ENCODE measurements at regions of chr12 and their contacts with region 1.

Region 1: GRCh38 chr12:58346032-58346632 is 404.8 kb downstream of the ATP23 start:
- DNase-seq: no peak
- H3K4me3 Mint-ChIP-seq: no peak overlapping the region
- H3K27ac Mint-ChIP-seq: no peak overlapping the region
- H3K4me1 Mint-ChIP-seq: no peaks in the 10 kb centered on the region
- H3K27me3 Mint-ChIP-seq: peaks cover 5% of the 10 kb centered on the region

Region 2: GRCh38 chr12:58247638-58248037 is 98.5 kb before region 1 on chr12:
- intact Hi-C with region 1: no loop called
- DNase-seq: no peak
- H3K4me3 Mint-ChIP-seq: no peak overlapping the region
- H3K27ac Mint-ChIP-seq: no peak overlapping the region
- H3K4me1 Mint-ChIP-seq: no peaks in the 10 kb centered on the region
- H3K27me3 Mint-ChIP-seq: peaks cover 2% of the 10 kb centered on the region

Region 3: DNA sequence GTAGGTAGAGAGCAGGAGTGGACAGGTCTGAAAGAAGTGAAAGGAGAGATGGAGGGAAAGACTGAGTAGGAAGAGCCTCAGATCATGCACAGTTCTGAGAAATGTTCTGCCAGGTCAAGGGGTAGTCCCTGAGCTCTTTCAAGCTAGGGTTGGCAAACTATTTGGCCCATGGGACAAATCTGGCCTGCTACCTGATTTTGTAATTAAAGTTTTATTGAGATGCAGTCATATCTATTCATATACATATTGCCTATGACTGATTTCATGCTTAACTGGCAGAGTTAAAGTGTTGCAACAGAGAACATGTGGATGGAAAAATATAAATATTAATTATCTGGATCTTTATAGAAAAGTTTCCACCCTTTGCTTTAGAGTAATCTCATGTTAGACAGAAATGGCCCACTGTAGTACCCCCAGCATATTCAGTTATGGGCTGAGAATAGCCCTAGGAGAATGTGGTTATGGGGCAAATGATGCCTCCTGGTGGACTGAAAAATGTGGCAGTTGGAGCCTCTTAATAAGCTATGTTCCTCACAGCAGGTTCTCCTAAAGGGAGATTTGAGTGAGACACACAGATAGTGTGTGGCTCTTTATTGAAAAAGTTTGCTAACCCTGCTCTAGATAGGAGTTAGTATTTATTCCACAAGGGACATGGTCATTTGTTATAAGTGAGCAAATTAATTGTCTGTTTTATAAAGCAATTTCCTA is 97.3 kb after region 1 on chr12:
- intact Hi-C with region 1: loop called (anchors 1 kb)
- DNase-seq: no peak
- H3K4me3 Mint-ChIP-seq: no peak overlapping the region
- H3K27ac Mint-ChIP-seq: no peak overlapping the region
- H3K4me1 Mint-ChIP-seq: no peaks in the 10 kb centered on the region
- H3K27me3 Mint-ChIP-seq: peaks cover 11% of the 10 kb centered on the region

Region 4: DNA sequence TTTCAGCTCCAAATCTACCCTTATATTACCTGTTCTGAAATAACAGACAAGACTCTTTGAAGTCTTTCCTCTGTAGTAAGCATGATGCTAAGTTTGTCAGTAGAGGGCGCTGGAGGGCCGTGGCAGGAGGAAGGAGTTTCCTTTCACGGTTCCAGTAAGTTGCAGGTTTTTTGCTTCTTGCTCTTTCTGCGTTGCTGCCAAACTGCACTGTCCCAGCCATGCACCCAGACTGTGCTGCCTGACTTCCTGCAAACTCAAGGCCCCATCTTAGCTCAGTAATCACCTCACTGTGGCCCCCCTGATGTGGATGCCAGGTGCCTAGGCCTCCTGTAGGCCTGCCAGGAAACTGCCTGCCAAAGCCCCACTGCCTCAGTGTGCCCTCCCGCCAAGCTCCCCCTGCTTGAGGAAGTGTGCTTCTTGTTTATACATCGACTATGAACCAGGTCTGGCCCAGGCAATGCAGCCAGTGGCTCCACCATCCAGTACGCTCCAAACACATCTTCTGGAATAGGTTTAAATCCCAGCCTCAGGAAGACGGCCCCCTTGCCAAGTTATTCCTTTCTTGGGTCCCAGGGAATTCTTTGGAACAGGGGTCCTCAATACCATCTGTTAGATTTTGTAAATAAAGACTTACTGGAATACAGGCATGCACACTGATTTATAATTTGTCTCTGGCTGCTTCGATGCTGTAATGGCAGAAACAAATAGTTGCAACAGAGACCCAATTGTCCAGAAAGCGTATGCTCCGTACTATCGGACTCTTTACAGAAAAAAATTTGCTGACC is 767.9 kb after region 1 on chr12:
- intact Hi-C with region 1: loop called (anchors 1 kb)
- DNase-seq: peak; percentile 41
- H3K4me3 Mint-ChIP-seq: no peak overlapping the region
- H3K27ac Mint-ChIP-seq: no peak overlapping the region
- H3K4me1 Mint-ChIP-seq: no peaks in the 10 kb centered on the region
- H3K27me3 Mint-ChIP-seq: no peaks in the 10 kb centered on the region

Region 5: DNA sequence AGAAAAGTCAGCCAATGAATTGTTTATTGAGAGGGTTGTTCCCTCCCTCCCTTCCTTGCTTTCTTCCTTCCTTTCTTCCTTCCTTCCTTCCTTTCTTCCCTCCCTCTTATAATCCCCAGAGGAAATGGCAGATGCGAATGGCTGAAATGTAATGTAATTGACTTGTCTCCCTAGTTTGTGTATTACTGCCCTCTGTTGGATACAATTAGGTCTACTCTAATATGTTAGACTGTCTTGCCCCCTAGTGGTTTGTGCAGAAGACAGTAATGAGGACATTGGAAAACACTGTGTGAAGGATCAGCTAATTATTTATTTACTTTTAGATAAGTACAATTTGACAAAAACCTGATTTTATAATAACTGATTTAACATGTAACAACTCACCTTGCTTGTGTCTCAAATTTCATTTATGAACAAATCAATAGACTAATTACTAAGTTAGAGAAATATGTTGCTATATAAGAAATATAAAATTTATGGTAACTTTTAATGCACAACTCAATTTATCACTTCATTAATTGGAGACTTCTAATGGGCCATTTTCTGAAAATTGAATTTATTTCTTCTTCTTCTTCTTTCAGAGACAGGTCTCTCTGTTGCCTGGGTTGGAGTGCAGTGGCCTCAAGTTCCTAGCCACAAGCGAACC is 804.0 kb after region 1 on chr12:
- intact Hi-C with region 1: loop called (anchors 1 kb)
- DNase-seq: peak; percentile 2
- H3K4me3 Mint-ChIP-seq: no peak overlapping the region
- H3K27ac Mint-ChIP-seq: no peak overlapping the region
- H3K4me1 Mint-ChIP-seq: no peaks in the 10 kb centered on the region
- H3K27me3 Mint-ChIP-seq: no peaks in the 10 kb centered on the region

Region 6: GRCh38 chr12:59164991-59165718 is 819.0 kb after region 1 on chr12:
- intact Hi-C with region 1: loop called (anchors 5 kb)
- DNase-seq: no peak
- H3K4me3 Mint-ChIP-seq: no peak overlapping the region
- H3K27ac Mint-ChIP-seq: no peak overlapping the region
- H3K4me1 Mint-ChIP-seq: no peaks in the 10 kb centered on the region
- H3K27me3 Mint-ChIP-seq: peaks cover 2% of the 10 kb centered on the region

Region 7: GRCh38 chr12:59372956-59373355 is 1026.8 kb after region 1 on chr12:
- intact Hi-C with region 1: loop called (anchors 10 kb)
- DNase-seq: no peak
- H3K4me3 Mint-ChIP-seq: no peak overlapping the region
- H3K27ac Mint-ChIP-seq: no peak overlapping the region
- H3K4me1 Mint-ChIP-seq: no peaks in the 10 kb centered on the region
- H3K27me3 Mint-ChIP-seq: peaks cover 1% of the 10 kb centered on the region